Ascending aorta (tissue), 2 donors: ENCODE measurements at regions of chr17 and their contacts with region 1.

Region 1: GRCh38 chr17:59619293-59620063 is at the start of gene CLTC:
- DNase-seq: peak; percentile 77 to 96
- H3K4me3 ChIP-seq: peak within 1 kb of the TSS; percentile 73 to 97
- H3K27ac ChIP-seq: peak within 1 kb of the TSS; percentile 98 to 99
- H3K4me1 ChIP-seq: peaks cover 9 to 31% of the 10 kb centered on the region in 2 donors
- H3K27me3 ChIP-seq: no peaks in the 10 kb centered on the region
- CTCF ChIP-seq: no peak
- total RNA-seq, gene CLTC: 88.7 TPM

Region 2: GRCh38 chr17:59565171-59565969 is 54.1 kb before region 1 on chr17 and contains the start of gene DHX40:
- intact Hi-C with region 1: loop called (anchors 5 kb)
- DNase-seq: peak; percentile 78 to 98
- H3K4me3 ChIP-seq: peak within 1 kb of the TSS; percentile 57 to 100
- H3K27ac ChIP-seq: peak within 1 kb of the TSS; percentile 81 to 97
- H3K4me1 ChIP-seq: peaks cover 0 to 8% of the 10 kb centered on the region in 2 donors
- H3K27me3 ChIP-seq: no peaks in the 10 kb centered on the region
- CTCF ChIP-seq: no peak
- total RNA-seq, gene DHX40: 4.8 TPM

Region 3: DNA sequence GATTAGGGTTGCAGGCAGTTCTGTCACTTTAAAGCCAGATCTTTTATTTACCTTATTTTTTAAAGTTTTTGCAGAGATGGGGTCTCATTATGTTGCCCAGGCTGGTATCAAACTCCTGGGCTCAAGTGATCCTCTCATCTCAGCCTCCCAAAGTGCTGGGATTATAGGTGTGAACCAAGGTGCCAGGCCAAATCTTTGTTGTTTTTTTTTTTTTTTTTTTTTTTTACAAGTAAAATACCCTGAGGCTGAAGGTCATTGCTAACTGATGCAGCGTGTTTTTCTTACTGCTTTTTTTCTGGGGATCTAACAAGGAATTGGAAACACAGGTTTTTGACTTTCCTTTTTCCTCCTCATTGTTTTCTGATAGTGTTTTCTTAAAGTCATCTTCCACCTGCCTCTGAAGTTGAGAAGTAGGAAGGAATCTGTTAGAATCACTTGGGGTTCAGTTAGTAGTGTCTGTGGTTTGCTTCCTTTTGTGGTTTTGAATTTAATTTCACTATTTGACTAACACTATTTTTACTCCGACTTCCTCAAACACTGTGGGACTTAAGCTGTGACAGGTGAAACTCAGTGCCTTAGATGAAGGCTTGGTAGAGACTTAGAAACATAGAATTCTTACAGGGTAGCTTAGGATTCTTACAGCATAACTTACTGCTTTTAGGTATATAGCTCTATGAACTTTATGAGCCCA is 22.5 kb after region 1 on chr17:
- intact Hi-C with region 1: loop called (anchors 2 kb)
- DNase-seq: no peak
- H3K4me3 ChIP-seq: no peak overlapping the region
- H3K27ac ChIP-seq: peak overlapping the region in 1 of 2 donors; percentile 70
- H3K4me1 ChIP-seq: peaks cover 7 to 31% of the 10 kb centered on the region in 2 donors
- H3K27me3 ChIP-seq: no peaks in the 10 kb centered on the region
- CTCF ChIP-seq: no peak

Region 4: DNA sequence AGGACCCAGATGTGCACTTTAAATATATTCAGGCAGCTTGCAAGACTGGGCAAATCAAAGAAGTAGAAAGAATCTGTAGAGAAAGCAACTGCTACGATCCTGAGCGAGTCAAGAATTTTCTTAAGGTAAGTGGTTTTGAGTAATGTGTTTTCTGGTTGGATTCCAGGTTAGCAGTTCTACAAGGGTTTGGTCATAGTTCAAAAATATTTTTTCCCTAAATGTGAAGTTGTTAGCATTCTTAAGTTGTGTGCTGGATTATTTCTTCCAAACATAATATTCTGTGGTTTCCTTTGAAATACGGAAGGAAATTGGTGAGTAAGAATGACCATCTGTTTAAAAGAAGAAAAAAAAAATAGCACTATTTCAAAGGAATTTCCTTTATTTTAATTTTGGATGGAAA is 49.3 kb after region 1 on chr17:
- intact Hi-C with region 1: loop called (anchors 2 kb)
- DNase-seq: no peak
- H3K4me3 ChIP-seq: no peak overlapping the region
- H3K27ac ChIP-seq: peak overlapping the region; percentile 73
- H3K4me1 ChIP-seq: peaks cover 4 to 26% of the 10 kb centered on the region in 2 donors
- H3K27me3 ChIP-seq: no peaks in the 10 kb centered on the region
- CTCF ChIP-seq: no peak

Region 5: DNA sequence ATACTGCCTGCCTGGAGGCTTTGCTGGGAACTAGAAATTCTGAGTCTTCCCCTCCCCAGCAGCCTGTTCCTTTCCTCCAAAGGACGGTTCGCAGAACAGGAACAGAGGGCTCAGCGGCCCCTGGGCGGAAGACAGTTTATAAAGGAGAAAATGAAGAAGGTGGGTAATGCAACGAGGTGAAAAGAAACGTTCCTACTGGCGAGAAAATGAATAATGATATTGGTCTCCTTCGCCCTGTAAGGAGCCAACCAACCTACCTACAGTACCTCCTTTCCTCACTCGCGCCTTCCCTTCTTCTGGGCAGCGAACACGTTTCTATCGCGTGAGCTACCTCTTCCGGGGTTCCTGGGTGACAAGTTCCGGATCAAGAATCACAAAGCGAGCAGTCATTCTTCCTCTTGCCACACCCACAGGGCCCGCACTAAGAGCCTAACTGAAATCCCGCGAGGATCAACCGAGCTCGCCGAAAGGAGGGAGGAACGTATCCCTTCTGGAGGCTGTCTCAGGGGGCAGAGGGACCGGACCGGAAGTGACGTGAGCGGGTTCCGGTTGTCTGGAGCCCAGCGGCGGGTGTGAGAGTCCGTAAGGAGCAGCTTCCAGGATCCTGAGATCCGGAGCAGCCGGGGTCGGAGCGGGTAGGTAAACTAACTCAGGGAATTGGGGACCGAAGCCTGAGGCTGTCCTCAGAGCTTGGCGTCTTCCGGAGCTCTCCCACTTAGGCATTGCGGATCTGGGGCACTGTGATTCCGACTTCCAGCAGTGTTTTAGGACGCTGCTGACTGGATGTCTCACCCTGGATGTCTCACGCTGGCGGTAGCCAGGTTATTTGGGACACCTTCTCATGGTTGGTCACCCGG is 87.9 kb after region 1 on chr17 and contains the starts of genes PTRH2 and VMP1:
- intact Hi-C with region 1: loop called (anchors 1 kb)
- DNase-seq: peak; percentile 98 to 99
- H3K4me3 ChIP-seq: peak within 1 kb of the TSS; percentile 75 to 90
- H3K27ac ChIP-seq: peak within 1 kb of the TSS; percentile 91 to 95
- H3K4me1 ChIP-seq: peaks cover 9 to 26% of the 10 kb centered on the region in 2 donors
- H3K27me3 ChIP-seq: no peaks in the 10 kb centered on the region
- CTCF ChIP-seq: no peak
- total RNA-seq, gene PTRH2: 125 TPM
- total RNA-seq, gene VMP1: 183 TPM